PC-9 (cell line): ENCODE measurements at regions of chr7 and their contacts with region 1.

Region 1: DNA sequence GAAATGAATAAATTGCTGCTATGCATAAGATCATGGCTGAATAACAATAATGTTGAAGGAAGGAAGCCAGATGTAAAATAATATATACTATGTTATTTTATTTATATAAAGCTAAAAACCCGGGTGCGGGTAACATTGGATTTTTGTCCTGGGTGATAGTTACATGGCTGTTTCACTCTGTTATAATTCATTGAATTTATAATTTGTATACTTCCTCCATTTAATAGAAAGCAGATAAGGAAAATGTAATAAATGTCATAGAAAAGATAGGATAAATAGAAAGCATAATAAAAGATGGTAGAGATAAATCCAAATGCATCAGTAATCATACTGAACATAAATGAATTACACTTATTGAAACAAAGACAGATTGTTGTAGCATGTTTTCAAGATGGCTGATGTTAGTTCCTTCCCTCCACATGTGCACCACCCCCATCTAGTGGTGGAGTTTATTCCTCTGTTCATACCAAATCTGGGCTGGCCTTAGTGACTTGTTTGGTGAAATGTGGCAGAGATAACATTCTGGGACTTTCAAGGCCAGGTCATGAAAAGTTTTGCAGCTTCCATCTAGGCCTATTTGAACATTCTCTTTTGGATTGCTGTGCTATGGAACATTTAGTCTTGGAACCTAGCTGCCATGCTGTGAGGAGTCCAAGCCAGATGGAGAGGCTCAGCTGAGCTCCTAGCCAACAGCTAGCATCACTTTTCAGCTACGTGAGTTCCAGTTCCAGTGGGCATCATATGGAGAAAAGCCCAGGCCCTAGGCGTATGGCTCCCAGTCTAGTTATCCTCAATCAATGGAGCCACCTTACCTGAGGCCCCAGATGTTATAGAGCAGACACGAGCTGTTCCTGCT is 46.9 kb downstream of the AHCYL2 start:
- DNase-seq: peak; percentile 34 to 47
- H3K4me3 ChIP-seq: no peak overlapping the region
- H3K27ac ChIP-seq: no peak overlapping the region
- H3K4me1 ChIP-seq: peaks cover 2% of the 10 kb centered on the region; the same call in 1 of the 2 replicates
- H3K27me3 ChIP-seq: no peaks in the 10 kb centered on the region
- CTCF ChIP-seq: peak; percentile 70

Region 2: DNA sequence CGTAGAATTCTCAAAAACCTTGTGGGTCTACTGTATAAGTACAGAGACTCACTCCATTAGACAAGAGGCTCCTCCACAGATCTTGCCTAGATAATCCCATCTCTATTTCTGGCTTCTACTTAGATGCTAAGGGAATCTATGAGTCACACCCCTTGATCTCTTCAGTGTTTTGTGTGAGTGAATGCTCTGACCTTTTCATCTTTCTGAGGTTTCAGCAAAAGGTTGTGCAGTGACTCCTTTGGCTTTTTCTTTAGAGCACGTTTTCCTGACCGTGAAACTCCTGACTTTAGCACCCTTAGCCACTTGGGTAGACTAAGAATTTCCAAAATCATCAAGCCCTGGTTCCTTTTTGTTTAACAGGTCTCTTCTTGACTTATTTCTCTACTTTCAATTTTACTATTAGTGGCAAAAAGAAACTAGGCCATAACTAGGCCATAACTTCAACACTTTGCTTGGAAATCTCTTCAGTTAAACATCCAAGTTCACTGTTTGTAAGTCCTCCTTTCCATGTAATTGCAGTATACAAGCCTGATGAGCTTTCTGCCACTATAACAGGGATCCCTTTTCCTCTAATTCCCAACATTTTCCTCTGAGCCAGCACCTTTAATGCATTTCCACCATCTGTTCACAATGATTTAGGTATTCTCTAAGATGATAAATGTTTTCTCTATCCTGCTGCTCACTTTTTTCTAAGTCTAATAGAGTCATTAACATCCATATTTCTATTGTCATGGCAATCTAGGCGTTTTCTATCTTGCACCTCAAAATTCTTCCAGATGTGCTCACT is 1377.5 kb after region 1 on chr7:
- CTCF ChIA-PET with region 1: interaction called, 11 read pairs
- POLR2A ChIA-PET with region 1: no interaction called
- intact Hi-C with region 1: no loop called
- DNase-seq: no peak
- H3K4me3 ChIP-seq: no peak overlapping the region
- H3K27ac ChIP-seq: no peak overlapping the region
- H3K4me1 ChIP-seq: no peaks in the 10 kb centered on the region
- H3K27me3 ChIP-seq: no peaks in the 10 kb centered on the region
- CTCF ChIP-seq: no peak